Activated T-helper 2 cell treated with anti-CD3 and anti-CD28 coated beads, Interferon-gamma antibody, Interleukin-2, Interleukin-4, amounts not matched to agents 10 μg/mL and 5 μg/mL and 100 μg/mL, durations not matched to agents 14 hours and 24 hours and 36 hours (primary cell): ENCODE measurements at regions of chr18 and their contacts with region 1.

Region 1: GRCh38 chr18:13318731-13319501 is 100.4 kb downstream of the LDLRAD4 start:
- DNase-seq: no peak
- H3K4me3 Mint-ChIP-seq: no peak overlapping the region
- H3K27ac Mint-ChIP-seq: peak overlapping the region; percentile 36
- H3K4me1 Mint-ChIP-seq: peaks cover 21% of the 10 kb centered on the region
- H3K27me3 Mint-ChIP-seq: no peaks in the 10 kb centered on the region

Region 2: GRCh38 chr18:13260197-13260934 is 58.5 kb before region 1 on chr18:
- intact Hi-C with region 1: no loop called
- DNase-seq: no peak
- H3K4me3 Mint-ChIP-seq: no peak overlapping the region
- H3K27ac Mint-ChIP-seq: no peak overlapping the region
- H3K4me1 Mint-ChIP-seq: peaks cover 23% of the 10 kb centered on the region
- H3K27me3 Mint-ChIP-seq: peaks cover 3% of the 10 kb centered on the region

Region 3: DNA sequence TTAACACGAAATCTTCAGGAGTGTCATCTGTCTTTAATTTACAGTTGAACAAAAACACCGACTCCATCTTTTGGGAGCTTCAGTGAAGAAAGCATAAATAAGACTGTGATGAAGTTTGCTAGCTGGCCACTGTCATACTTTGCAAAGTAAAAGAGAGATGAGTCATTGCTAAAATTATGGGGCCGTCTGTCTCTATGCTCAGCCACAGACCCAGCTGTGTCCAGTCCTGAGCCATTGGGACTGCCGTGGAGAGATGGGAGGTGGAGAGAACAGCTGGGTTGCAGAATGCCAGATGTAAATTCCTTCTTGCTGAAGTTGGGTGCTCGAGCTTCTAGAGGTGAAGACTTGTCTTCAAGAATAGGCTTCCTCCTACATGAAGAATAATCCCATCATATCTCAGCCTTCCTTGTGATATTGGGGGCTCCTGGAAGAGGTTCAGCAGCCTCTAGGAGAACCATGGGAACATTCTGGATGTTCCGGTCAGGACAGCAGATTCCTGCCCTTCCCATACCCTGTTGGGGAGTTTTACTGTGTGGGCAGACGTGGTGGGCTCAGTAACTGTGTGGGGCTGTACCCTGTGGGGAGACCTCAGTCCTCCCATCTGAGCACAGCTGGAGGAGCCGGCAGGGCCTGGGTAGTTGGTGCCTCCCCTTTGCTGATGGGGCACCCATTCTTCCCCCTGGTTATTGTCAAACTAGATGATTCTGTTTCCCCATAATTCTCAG is 29.3 kb before region 1 on chr18:
- intact Hi-C with region 1: loop called (anchors 2 kb)
- DNase-seq: no peak
- H3K4me3 Mint-ChIP-seq: no peak overlapping the region
- H3K27ac Mint-ChIP-seq: peak overlapping the region; percentile 64
- H3K4me1 Mint-ChIP-seq: peaks cover 55% of the 10 kb centered on the region
- H3K27me3 Mint-ChIP-seq: no peaks in the 10 kb centered on the region

Region 4: DNA sequence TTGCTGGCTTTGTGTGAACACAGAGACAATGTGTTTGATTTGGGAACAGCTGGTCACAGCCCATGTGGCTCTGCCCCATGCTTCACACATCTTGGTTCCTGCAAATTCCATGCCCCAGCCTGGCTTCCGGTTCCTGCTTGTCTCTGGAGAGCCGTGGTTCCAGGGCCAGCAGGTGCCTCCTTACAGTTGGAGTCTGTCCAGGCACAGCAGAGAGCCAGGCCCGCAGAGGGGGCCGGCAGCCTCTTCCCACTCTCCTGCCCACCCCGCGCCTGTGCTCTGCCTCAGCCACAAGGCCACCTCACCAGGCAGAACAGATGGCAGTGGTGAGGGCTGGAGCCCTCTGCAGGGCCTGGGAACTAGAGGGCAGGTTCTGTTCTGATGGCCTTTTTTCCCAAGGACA is 18.9 kb before region 1 on chr18:
- intact Hi-C with region 1: no loop called
- DNase-seq: no peak
- H3K4me3 Mint-ChIP-seq: no peak overlapping the region
- H3K27ac Mint-ChIP-seq: no peak overlapping the region
- H3K4me1 Mint-ChIP-seq: peaks cover 8% of the 10 kb centered on the region
- H3K27me3 Mint-ChIP-seq: no peaks in the 10 kb centered on the region

Region 5: DNA sequence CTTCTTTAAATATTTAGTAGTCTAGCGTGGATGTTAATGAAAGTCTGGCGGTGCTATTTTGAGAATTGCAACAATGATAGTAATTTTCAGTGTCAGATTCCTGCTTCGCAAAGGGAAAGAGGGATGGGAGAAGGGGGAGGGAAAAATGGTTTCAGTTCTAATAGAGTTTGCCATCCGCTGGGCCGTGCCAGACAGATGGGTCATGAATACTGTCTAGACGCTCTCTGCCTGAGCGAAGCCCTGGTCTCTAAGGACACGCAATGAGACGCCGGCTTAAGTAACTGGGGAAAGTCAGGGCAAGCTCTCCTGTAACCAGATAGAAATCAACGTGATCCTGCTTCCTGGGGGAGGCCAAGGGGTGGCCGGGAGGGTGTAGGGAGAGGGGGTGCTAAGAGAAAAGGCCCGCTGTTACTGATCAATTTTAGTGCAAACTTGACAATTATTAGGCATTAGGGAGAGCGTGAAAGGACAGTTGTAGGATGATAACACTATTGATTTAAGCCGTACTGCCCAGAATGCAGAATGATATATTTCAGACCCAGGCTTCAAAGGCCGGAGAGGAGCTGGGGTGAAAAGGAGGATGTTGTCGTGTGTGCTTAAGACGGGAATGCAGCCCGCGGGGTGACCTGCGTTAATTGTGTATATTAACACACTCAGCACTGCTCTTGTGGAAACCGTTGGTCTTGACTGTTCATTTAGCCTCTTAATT is 128.9 kb after region 1 on chr18:
- intact Hi-C with region 1: no loop called
- DNase-seq: no peak
- H3K4me3 Mint-ChIP-seq: no peak overlapping the region
- H3K27ac Mint-ChIP-seq: no peak overlapping the region
- H3K4me1 Mint-ChIP-seq: peaks cover 15% of the 10 kb centered on the region
- H3K27me3 Mint-ChIP-seq: no peaks in the 10 kb centered on the region

Region 6: GRCh38 chr18:13513021-13513420 is 194.1 kb after region 1 on chr18:
- intact Hi-C with region 1: no loop called
- DNase-seq: no peak
- H3K4me3 Mint-ChIP-seq: no peak overlapping the region
- H3K27ac Mint-ChIP-seq: no peak overlapping the region
- H3K4me1 Mint-ChIP-seq: peaks cover 16% of the 10 kb centered on the region
- H3K27me3 Mint-ChIP-seq: no peaks in the 10 kb centered on the region